Heart left ventricle (tissue), 16 donors: ENCODE measurements at regions of chr11 and their contacts with region 1.

Region 1: GRCh38 chr11:124800226-124800929 is at the start of gene MSANTD2:
- DNase-seq: peak; percentile 83 to 91 (median 87)
- ATAC-seq: peak; percentile 91 to 98 (median 98)
- H3K4me3 ChIP-seq: peak within 1 kb of the TSS; percentile 71 to 94 (median 88)
- H3K27ac ChIP-seq: peak within 1 kb of the TSS; percentile 90 to 100 (median 98)
- H3K4me1 ChIP-seq: peaks cover 3 to 38% (median 32%) of the 10 kb centered on the region in 12 donors
- H3K27me3 ChIP-seq: no peaks in the 10 kb centered on the region
- CTCF ChIP-seq: peak in 1 of 12 donors; percentile 20
- POLR2A ChIP-seq: peak in 1 of 2 donors; percentile 86
- total RNA-seq, gene MSANTD2: 2.2 to 5.4 (median 3.1) TPM

Region 2: DNA sequence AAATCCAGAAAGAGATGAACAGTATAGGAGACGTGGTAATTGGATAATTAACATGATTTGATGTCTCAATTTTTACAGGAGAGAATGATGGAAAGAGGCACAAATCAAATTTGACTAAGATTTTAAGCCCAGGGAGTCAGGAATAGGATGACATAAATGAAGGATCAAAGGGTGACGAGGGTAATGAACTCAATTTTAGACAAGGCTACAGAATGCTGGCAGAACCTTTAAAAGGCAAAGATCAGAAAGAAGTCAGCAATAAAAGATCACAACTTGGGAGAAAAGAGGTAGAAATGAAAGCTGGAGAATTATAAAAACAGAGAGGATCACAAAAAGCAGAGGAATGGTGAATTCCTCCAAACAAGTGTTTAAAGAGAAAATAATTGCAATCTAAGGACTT is 243.6 kb before region 1 on chr11:
- intact Hi-C with region 1: no loop called
- DNase-seq: no peak
- ATAC-seq: no peak
- H3K4me3 ChIP-seq: no peak overlapping the region
- H3K27ac ChIP-seq: no peak overlapping the region
- H3K4me1 ChIP-seq: no peaks in the 10 kb centered on the region
- H3K27me3 ChIP-seq: no peaks in the 10 kb centered on the region
- CTCF ChIP-seq: no peak
- POLR2A ChIP-seq: no peak

Region 3: DNA sequence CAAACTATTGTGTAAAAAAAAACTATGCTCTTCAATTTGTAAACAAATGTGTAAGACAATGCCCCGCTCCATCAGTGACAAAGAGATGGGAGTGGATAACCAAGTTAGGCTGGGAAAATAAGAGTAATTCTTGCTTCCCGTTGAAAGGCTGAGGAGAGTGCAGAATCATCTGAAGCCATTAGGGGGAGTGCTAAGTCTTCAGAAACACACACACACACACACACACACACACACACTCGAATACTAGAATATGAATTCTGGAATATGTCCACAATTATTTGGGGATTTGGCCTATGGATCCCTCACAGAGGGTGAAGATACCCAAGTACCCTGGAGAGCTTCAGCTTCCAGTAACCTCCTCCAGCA is 37.1 kb after region 1 on chr11:
- intact Hi-C with region 1: loop called in 2 of 10 experiments (anchors 2 kb)
- DNase-seq: peak in 1 of 5 donors; percentile 26
- ATAC-seq: peak in 3 of 4 donors; percentile 53 to 71 (median 69)
- H3K4me3 ChIP-seq: no peak overlapping the region
- H3K27ac ChIP-seq: no peak overlapping the region
- H3K4me1 ChIP-seq: peaks cover 6 to 20% (median 15%) of the 10 kb centered on the region in 12 donors
- H3K27me3 ChIP-seq: peaks cover 23 to 70% (median 45%) of the 10 kb centered on the region in 9 donors
- CTCF ChIP-seq: peak in 1 of 12 donors; percentile 20
- POLR2A ChIP-seq: no peak

Region 4: DNA sequence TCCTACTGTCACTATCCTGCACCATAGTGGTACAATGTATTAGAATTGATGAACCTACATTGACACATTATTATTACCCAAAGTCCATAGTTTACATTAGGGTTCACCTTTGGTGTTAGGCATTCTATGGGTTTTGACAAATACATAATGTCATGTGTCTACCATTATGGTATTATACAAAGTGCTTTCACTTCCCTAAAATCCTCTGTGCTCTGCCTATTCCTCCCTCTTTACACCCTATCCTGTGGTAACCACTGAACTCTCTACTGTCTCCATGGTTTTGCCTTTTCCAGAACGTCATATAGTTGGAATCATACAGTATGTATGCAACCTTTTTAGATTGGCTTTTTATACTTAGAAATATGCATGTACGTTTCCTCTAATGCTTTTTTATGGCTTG is 205.1 kb after region 1 on chr11:
- intact Hi-C with region 1: no loop called
- DNase-seq: no peak
- ATAC-seq: no peak
- H3K4me3 ChIP-seq: no peak overlapping the region
- H3K27ac ChIP-seq: no peak overlapping the region
- H3K4me1 ChIP-seq: no peaks in the 10 kb centered on the region
- H3K27me3 ChIP-seq: no peaks in the 10 kb centered on the region
- CTCF ChIP-seq: no peak
- POLR2A ChIP-seq: no peak